PC-9 (cell line): ENCODE measurements at regions of chr5 and their contacts with region 1.

Region 1: DNA sequence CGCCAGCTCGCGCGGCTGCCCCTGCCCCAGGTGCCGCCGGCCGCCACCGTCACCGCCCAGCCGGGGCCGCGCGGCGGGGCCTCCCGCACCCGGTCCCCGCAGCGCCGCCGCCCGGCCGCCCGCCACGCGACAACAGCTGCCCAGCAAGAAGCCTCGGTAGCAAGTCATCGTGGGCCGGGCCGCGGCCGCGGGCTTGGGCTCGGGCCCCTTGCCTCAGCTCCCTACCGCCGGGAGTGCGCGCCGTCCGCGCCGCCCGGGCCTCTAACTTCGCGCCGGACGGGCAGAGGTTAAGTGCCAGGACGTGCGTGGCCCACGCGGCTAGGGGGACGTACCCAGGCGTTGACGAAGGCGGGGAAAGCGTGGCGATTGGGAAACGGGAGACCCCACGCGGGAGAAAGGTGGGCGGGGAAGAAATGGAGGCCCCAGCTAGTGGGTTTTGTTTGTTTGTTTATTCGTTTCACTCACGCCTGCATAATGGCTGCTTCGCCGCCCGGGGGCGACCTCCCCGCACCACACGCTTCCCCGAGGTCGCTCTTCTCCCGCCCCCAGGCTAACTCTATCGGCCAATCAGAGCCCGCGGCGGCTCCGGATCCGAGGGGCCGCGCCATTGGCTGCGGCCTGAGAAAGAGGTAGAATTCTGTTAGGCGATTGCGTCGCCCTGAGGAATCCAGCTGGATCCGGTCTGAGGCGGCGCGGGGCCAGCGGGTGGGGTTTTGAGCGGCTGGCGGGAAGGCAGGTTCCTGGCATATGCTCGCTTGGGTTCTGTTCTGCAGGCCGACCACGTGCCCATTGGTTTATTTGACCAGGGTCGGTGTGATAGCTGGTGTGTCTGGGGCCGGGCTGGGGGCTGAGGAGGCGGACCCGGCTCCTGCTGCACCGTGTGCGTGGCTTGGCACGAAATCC is at the start of gene NADK2:
- DNase-seq: peak; percentile 93 to 99
- H3K4me3 ChIP-seq: peak within 1 kb of the TSS; percentile 93
- H3K27ac ChIP-seq: peak within 1 kb of the TSS; percentile 81
- H3K4me1 ChIP-seq: peaks cover 39% of the 10 kb centered on the region
- H3K27me3 ChIP-seq: no peaks in the 10 kb centered on the region
- CTCF ChIP-seq: peak; percentile 71
- total RNA-seq, gene NADK2: 43.7 and 55.7 TPM in 2 replicates

Region 2: GRCh38 chr5:36151434-36152323 is 90.2 kb before region 1 on chr5 and contains the starts of genes LMBRD2 and SKP2:
- CTCF ChIA-PET with region 1: interaction called, 4 read pairs
- POLR2A ChIA-PET with region 1: interaction called, 4 read pairs
- intact Hi-C with region 1: loop called (anchors 1 kb)
- DNase-seq: peak; percentile 98 to 100
- H3K4me3 ChIP-seq: peak within 1 kb of the TSS; percentile 90
- H3K27ac ChIP-seq: peak within 1 kb of the TSS; percentile 38
- H3K4me1 ChIP-seq: peaks cover 17% of the 10 kb centered on the region
- H3K27me3 ChIP-seq: no peaks in the 10 kb centered on the region
- CTCF ChIP-seq: no peak
- total RNA-seq, gene LMBRD2: 8.5 and 18.0 TPM in 2 replicates
- total RNA-seq, gene SKP2: 121 and 153 TPM in 2 replicates

Region 3: GRCh38 chr5:36230151-36230793 is 11.6 kb before region 1 on chr5:
- CTCF ChIA-PET with region 1: interaction called, 5 read pairs
- POLR2A ChIA-PET with region 1: interaction called, 6 read pairs
- intact Hi-C with region 1: loop called (anchors 1 kb)
- DNase-seq: peak in 1 of 2 experiments; percentile 33
- H3K4me3 ChIP-seq: no peak overlapping the region
- H3K27ac ChIP-seq: no peak overlapping the region
- H3K4me1 ChIP-seq: peaks cover 19% of the 10 kb centered on the region
- H3K27me3 ChIP-seq: no peaks in the 10 kb centered on the region
- CTCF ChIP-seq: no peak